K562 (cell line): ENCODE measurements at regions of chr12 and their contacts with region 1.

Region 1: GRCh38 chr12:127108360-127109215 is 1158.4 kb upstream of the TMEM132C start:
- DNase-seq: peak; percentile 65 to 80 (median 72)
- ATAC-seq: peak; percentile 98
- H3K4me3 ChIP-seq: no peak overlapping the region
- H3K27ac ChIP-seq: no peak overlapping the region
- H3K4me1 ChIP-seq: peaks cover 0 to 4% of the 10 kb centered on the region in 2 experiments; a peak in 3 of 5 replicates
- H3K27me3 ChIP-seq: no peaks in the 10 kb centered on the region
- CTCF ChIP-seq: peak; percentile 73 to 77 (median 76)
- EP300 ChIP-seq: no peak
- POLR2A ChIP-seq: no peak
- RAD21 ChIP-seq: peak; percentile 62 to 83

Region 2: DNA sequence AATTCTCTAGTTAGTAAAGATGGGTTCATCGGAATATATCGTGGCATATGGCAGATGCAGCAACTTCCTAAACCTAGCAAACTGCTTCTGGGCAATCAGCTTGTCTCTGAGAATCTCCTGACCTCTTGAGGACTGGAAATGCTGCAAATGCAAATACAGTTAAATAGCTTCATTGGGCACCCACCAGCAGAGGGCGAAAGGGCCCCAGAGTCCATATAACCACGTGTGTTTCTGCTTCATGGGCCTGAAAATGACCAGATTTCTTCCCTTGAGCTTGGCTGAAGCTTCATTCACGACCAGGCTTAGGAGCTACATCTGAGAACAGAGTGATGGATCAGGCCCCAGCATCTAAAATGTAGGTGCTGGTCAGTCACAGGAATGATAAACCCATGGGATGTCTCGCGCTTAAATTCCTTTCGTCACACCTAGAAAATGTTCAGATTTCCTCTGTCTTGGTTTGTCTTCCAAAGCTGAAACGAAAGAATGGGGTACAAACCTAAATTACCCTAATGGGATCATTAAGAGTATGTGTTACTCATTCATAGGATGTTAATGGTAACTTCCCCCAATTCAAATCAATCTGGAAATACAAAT is 324.2 kb before region 1 on chr12:
- CTCF ChIA-PET with region 1: no interaction called
- POLR2A ChIA-PET with region 1: no interaction called
- in situ Hi-C with region 1: no loop called
- intact Hi-C with region 1: loop called (anchors 2 kb)
- DNase-seq: peak; percentile 31 to 79 (median 47)
- ATAC-seq: peak; percentile 93
- H3K4me3 ChIP-seq: no peak overlapping the region
- H3K27ac ChIP-seq: no peak overlapping the region
- H3K4me1 ChIP-seq: no peaks in the 10 kb centered on the region; a peak in 2 of 5 replicates
- H3K27me3 ChIP-seq: peaks cover 0 to 4% of the 10 kb centered on the region in 2 experiments; a peak in 3 of 5 replicates
- CTCF ChIP-seq: peak; percentile 87 to 94 (median 92)
- EP300 ChIP-seq: no peak
- POLR2A ChIP-seq: no peak
- RAD21 ChIP-seq: peak; percentile 72 to 88

Region 3: GRCh38 chr12:126966498-126966897 is 142.1 kb before region 1 on chr12:
- CTCF ChIA-PET with region 1: no interaction called
- POLR2A ChIA-PET with region 1: no interaction called
- in situ Hi-C with region 1: no loop called
- intact Hi-C with region 1: no loop called
- DNase-seq: no peak
- ATAC-seq: no peak
- H3K4me3 ChIP-seq: no peak overlapping the region
- H3K27ac ChIP-seq: no peak overlapping the region
- H3K4me1 ChIP-seq: no peaks in the 10 kb centered on the region
- H3K27me3 ChIP-seq: no peaks in the 10 kb centered on the region
- CTCF ChIP-seq: no peak
- EP300 ChIP-seq: no peak
- POLR2A ChIP-seq: no peak
- RAD21 ChIP-seq: no peak

Region 4: DNA sequence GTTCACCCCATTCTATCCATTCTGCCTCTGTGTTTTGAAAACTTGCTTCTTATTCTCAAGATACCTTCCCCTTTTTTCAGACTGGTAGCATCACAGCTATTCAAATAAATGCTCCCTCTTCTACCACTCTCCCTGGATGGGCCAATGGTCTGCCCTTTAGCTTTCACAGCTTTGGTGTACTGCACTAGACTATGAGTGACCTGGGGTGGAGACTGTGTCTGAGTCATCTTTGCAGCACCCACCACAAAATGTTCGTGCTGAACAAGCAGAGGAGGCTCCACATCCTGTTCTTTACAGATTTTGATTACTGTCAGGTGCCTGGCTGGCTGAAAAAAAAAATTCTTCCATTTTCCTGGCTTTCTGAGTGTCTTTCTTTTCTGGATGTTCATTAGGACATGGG is 54.3 kb after region 1 on chr12:
- CTCF ChIA-PET with region 1: interaction called, 3 read pairs
- POLR2A ChIA-PET with region 1: no interaction called
- in situ Hi-C with region 1: no loop called
- intact Hi-C with region 1: loop called (anchors 5 kb)
- DNase-seq: peak; percentile 22 to 79 (median 42)
- ATAC-seq: peak; percentile 55
- H3K4me3 ChIP-seq: no peak overlapping the region
- H3K27ac ChIP-seq: peak overlapping the region; percentile 44; the same call in 2 of the 3 replicates
- H3K4me1 ChIP-seq: peaks cover 16 to 39% of the 10 kb centered on the region in 2 experiments
- H3K27me3 ChIP-seq: no peaks in the 10 kb centered on the region
- CTCF ChIP-seq: no peak
- EP300 ChIP-seq: 0 out of 2 replicates have a peak, but pooled peaks have one; percentile 17
- POLR2A ChIP-seq: no peak
- RAD21 ChIP-seq: no peak

Region 5: GRCh38 chr12:127355061-127355841 is 246.7 kb after region 1 on chr12:
- CTCF ChIA-PET with region 1: no interaction called
- POLR2A ChIA-PET with region 1: interaction called, 3 read pairs
- in situ Hi-C with region 1: no loop called
- intact Hi-C with region 1: loop called (anchors 2 kb)
- DNase-seq: peak; percentile 39 to 53 (median 49)
- ATAC-seq: peak; percentile 94
- H3K4me3 ChIP-seq: no peak overlapping the region
- H3K27ac ChIP-seq: no peak overlapping the region
- H3K4me1 ChIP-seq: no peaks in the 10 kb centered on the region
- H3K27me3 ChIP-seq: no peaks in the 10 kb centered on the region
- CTCF ChIP-seq: peak; percentile 51 to 74 (median 70)
- EP300 ChIP-seq: no peak
- POLR2A ChIP-seq: no peak
- RAD21 ChIP-seq: peak; percentile 44 to 61

Region 6: GRCh38 chr12:127381048-127381668 is 272.6 kb after region 1 on chr12:
- CTCF ChIA-PET with region 1: no interaction called
- POLR2A ChIA-PET with region 1: no interaction called
- in situ Hi-C with region 1: no loop called
- intact Hi-C with region 1: loop called (anchors 5 kb)
- DNase-seq: peak; percentile 70 to 85 (median 82)
- ATAC-seq: peak; percentile 100
- H3K4me3 ChIP-seq: no peak overlapping the region
- H3K27ac ChIP-seq: no peak overlapping the region
- H3K4me1 ChIP-seq: peaks cover 0 to 4% of the 10 kb centered on the region in 2 experiments; a peak in 1 of 5 replicates
- H3K27me3 ChIP-seq: peaks cover 0 to 5% of the 10 kb centered on the region in 2 experiments; a peak in 1 of 5 replicates
- CTCF ChIP-seq: peak; percentile 88 to 91 (median 90)
- EP300 ChIP-seq: no peak
- POLR2A ChIP-seq: no peak
- RAD21 ChIP-seq: peak; percentile 76 to 93